Prostate gland (tissue), 2 donors: ENCODE measurements at regions of chr19 and their contacts with region 1.

Region 1: GRCh38 chr19:45178262-45179071 is at the start of gene BLOC1S3:
- DNase-seq: peak; percentile 100
- H3K4me3 ChIP-seq: peak within 1 kb of the TSS; percentile 68 to 96
- H3K27ac ChIP-seq: peak within 1 kb of the TSS; percentile 87 to 93
- H3K4me1 ChIP-seq: peaks cover 2% of the 10 kb centered on the region
- H3K27me3 ChIP-seq: no peaks in the 10 kb centered on the region
- CTCF ChIP-seq: peak; percentile 58 to 86 (median 63)
- POLR2A ChIP-seq: peak; percentile 81
- total RNA-seq, gene BLOC1S3: 21.4 to 30.4 TPM

Region 2: GRCh38 chr19:45091031-45091923 is 87.2 kb before region 1 on chr19:
- intact Hi-C with region 1: loop called (anchors 2 kb)
- DNase-seq: peak; percentile 99
- H3K4me3 ChIP-seq: peak overlapping the region; percentile 84 to 99
- H3K27ac ChIP-seq: peak overlapping the region; percentile 83 to 88
- H3K4me1 ChIP-seq: peaks cover 15% of the 10 kb centered on the region
- H3K27me3 ChIP-seq: no peaks in the 10 kb centered on the region
- CTCF ChIP-seq: peak in 2 of 4 experiments; percentile 5 to 16
- POLR2A ChIP-seq: peak; percentile 23